Endothelial cell of umbilical vein (primary cell): ENCODE measurements at regions of chr7 and their contacts with region 1.

Region 1: DNA sequence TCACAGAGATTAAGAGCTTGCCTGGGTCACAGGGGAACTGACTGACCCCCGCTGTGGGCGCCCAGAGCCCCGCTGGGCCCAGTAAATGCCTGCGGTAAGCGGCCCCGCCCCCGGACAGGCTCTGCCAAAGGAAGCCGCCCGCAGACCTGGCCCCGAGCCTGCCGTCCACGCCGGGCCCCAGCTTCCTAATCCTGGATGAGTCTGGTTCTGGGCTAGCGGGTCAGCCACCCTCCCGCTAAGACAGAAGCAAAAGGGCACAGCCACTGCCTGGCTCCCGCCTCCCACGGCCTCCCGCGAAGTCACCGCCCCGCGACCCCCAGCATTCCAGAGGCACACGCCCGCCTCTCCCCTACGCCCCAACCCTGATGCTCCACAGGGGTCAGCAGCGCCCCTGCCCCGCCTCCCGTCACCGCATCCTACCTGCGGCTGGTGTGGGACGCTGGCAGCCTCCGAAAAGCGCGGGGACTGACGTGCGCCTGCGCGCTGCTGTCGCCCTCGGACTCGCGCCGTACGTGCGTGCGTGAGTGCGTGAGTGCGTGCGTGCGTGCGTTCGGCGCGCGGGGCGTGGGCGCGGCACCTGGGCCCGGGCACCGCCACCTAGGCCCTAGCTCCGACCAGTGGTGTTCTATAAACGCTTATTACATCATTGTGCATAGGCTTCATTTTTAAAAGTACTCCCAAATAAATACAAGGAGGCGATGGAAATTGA is at the start of gene FIGNL1:
- DNase-seq: peak; percentile 78
- H3K4me3 ChIP-seq: peak within 1 kb of the TSS; percentile 44 to 98 (median 64)
- H3K27ac ChIP-seq: peak within 1 kb of the TSS; percentile 66
- H3K4me1 ChIP-seq: peaks cover 38% of the 10 kb centered on the region
- H3K27me3 ChIP-seq: peaks cover 0 to 5% of the 10 kb centered on the region in 2 experiments
- CTCF ChIP-seq: no peak
- POLR2A ChIP-seq: peak; percentile 79
- total RNA-seq, gene FIGNL1: 37.2 and 49.3 TPM in 2 replicates

Region 2: DNA sequence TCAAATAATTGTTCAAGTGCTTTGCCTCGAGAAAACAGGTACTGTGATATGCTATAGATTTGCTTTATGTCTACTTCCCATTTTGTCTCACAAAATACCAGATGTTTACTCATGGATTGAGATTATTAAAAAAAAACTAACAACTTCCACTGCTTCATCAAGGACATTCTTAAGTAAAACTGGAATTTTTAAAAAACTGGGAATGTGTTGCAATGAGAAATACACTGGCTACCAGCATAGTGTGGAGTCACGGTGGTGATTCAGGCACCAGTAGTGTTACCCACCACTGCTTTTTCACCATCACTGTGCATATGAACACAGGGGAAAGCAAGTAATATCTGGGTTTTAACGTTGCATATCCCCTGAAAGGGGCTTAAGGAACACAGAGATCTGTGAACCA is 21.1 kb before region 1 on chr7:
- CTCF ChIA-PET with region 1: no interaction called
- POLR2A ChIA-PET with region 1: no interaction called
- dilution Hi-C with region 1: no loop called
- intact Hi-C with region 1: no loop called
- DNase-seq: no peak
- H3K4me3 ChIP-seq: no peak overlapping the region
- H3K27ac ChIP-seq: no peak overlapping the region
- H3K4me1 ChIP-seq: no peaks in the 10 kb centered on the region
- H3K27me3 ChIP-seq: no peaks in the 10 kb centered on the region
- CTCF ChIP-seq: no peak
- POLR2A ChIP-seq: no peak

Region 3: DNA sequence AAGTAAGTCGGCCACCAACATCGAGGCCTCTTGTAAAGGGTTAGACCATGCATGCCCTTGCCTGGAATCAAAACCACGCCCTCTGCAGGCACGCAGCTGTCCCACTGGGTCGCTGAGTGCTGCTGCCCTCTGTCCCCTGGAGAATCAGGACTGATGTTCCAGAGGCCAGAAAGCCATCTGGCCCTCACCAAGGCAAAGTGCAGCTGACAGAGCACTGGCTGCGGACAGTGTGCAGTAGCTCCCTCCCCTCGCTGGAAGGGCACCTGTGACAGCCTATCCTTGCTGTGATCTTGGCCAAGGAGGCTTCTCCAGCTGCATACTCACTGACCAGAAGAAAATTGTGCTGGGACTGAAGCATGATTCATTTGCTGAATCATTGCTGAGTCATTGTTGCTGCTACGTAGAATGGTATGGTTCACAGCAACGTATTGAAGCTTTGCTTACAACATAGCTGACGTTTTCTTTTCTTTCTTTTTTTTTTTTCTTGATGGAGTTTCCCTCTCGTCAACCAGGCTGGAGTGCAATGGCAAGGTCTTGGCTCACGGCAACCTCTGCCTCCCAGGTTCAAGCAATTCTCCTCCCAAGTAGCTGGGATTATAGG is 84.8 kb after region 1 on chr7:
- CTCF ChIA-PET with region 1: interaction called, 3 read pairs
- POLR2A ChIA-PET with region 1: no interaction called
- dilution Hi-C with region 1: no loop called
- intact Hi-C with region 1: loop called (anchors 1 kb)
- DNase-seq: peak; percentile 94
- H3K4me3 ChIP-seq: no peak overlapping the region
- H3K27ac ChIP-seq: peak overlapping the region; percentile 33
- H3K4me1 ChIP-seq: peaks cover 13% of the 10 kb centered on the region
- H3K27me3 ChIP-seq: no peaks in the 10 kb centered on the region
- CTCF ChIP-seq: no peak
- POLR2A ChIP-seq: no peak

Region 4: GRCh38 chr7:50962962-50963374 is 512.9 kb after region 1 on chr7:
- CTCF ChIA-PET with region 1: no interaction called
- POLR2A ChIA-PET with region 1: no interaction called
- dilution Hi-C with region 1: no loop called
- intact Hi-C with region 1: loop called (anchors 5 kb)
- DNase-seq: peak; percentile 93
- H3K4me3 ChIP-seq: no peak overlapping the region
- H3K27ac ChIP-seq: peak overlapping the region; percentile 14
- H3K4me1 ChIP-seq: peaks cover 29% of the 10 kb centered on the region
- H3K27me3 ChIP-seq: no peaks in the 10 kb centered on the region
- CTCF ChIP-seq: no peak
- POLR2A ChIP-seq: no peak